ENCODE measurements at regions of chr1 and their contacts with region 1.

Region 1: GRCh38 chr1:150010393-150011115 is at the start of gene OTUD7B:
- DNase-seq: peak; percentile 66
- ATAC-seq: peak; percentile 88
- H3K4me3 ChIP-seq: peak within 1 kb of the TSS; percentile 89 to 90 (median 89)
- H3K27ac ChIP-seq: peak within 1 kb of the TSS; percentile 87
- H3K4me1 ChIP-seq: peaks cover 52% of the 10 kb centered on the region
- H3K27me3 ChIP-seq: no peaks in the 10 kb centered on the region; a peak in 1 of 5 replicates
- CTCF ChIP-seq: peak; percentile 41
- EP300 ChIP-seq: peak in 1 of 2 experiments; percentile 61; a peak in 2 of 4 replicates
- POLR2A ChIP-seq: peak; percentile 76 to 85
- RAD21 ChIP-seq: peak; percentile 62
- total RNA-seq, gene OTUD7B: 11.2 and 13.2 TPM in 2 replicates

Region 2: GRCh38 chr1:150021191-150021694 is 10.7 kb after region 1 on chr1:
- CTCF ChIA-PET with region 1: no interaction called
- POLR2A ChIA-PET with region 1: interaction called, 58 read pairs
- in situ Hi-C with region 1: no loop called
- intact Hi-C with region 1: loop called (anchors 1 kb)
- DNase-seq: peak; percentile 95
- ATAC-seq: peak; percentile 98
- H3K4me3 ChIP-seq: peak overlapping the region in 1 of 3 experiments; percentile 12; a peak in 1 of 6 replicates
- H3K27ac ChIP-seq: peak overlapping the region; percentile 61
- H3K4me1 ChIP-seq: peaks cover 36% of the 10 kb centered on the region
- H3K27me3 ChIP-seq: no peaks in the 10 kb centered on the region
- CTCF ChIP-seq: peak; percentile 18; the same call in 1 of the 2 replicates
- EP300 ChIP-seq: peak in 1 of 2 experiments; percentile 54; a peak in 2 of 4 replicates
- POLR2A ChIP-seq: peak in 1 of 2 experiments; percentile 56; a peak in 1 of 4 replicates
- RAD21 ChIP-seq: no peak

Region 3: DNA sequence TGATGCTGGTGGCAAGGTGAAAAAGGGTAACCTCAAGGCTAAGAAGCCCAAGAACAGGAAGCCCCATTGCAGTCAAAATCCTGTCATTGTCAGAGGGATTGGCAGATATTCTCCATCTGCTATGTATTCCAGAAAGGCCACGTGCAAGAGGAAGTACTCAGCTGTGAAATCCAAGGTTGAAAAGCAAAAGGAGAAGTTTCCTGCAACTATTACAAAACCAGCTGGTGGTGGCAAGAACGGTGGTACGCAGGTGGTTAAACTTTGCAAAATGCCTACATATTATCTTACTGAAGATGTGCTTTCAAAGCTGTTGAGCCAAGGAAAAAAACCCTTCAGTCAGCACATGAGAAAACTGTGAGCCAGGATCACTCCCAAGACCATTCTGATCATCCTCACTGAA is 43.4 kb after region 1 on chr1:
- CTCF ChIA-PET with region 1: no interaction called
- POLR2A ChIA-PET with region 1: interaction called, 3 read pairs
- in situ Hi-C with region 1: no loop called
- intact Hi-C with region 1: loop called (anchors 2 kb)
- DNase-seq: no peak
- ATAC-seq: no peak
- H3K4me3 ChIP-seq: no peak overlapping the region
- H3K27ac ChIP-seq: no peak overlapping the region
- H3K4me1 ChIP-seq: peaks cover 16% of the 10 kb centered on the region; the same call in 1 of the 2 replicates
- H3K27me3 ChIP-seq: no peaks in the 10 kb centered on the region
- CTCF ChIP-seq: no peak
- EP300 ChIP-seq: no peak
- POLR2A ChIP-seq: no peak
- RAD21 ChIP-seq: no peak

Region 4: DNA sequence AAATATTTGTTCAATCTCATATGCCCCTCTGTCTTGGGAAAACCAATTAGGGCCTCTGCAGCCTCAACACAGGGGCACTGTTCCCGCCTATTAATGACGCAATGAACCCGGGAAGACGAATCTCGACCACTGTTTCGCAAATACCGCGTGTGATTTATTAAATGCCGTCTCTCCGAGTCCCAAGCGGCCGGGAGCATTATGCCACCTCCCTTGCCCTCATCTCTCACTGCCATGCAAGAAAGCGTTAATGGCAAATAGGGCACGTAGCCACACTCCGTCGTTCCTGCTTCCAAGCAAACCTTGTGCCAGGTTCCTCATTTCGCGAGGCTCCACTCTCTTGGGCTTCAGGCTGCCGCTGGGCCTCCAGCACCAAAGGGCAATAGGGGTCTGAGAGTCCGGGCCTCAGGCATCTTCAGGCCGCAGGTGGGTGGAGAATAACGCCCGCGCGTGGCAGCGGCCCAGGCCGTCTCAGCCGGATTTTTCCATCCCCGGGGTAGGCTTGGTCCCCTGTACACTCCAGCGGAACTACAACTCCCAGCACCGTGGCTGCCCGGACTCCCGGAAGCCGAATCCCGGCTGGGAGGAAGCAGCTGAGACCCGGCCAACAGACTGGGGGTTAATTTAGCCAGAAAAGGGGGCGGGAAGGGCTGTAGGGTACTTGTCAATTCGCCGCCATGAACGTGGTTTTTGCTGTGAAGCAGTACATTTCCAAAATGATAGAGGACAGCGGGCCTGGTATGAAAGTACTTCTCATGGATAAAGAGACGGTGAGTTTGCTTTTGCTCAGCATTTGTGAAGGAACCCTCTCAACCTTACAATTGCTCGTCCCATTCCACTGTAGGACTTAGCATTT is 56.9 kb after region 1 on chr1 and contains the start of gene VPS45:
- CTCF ChIA-PET with region 1: no interaction called
- POLR2A ChIA-PET with region 1: interaction called, 6 read pairs
- in situ Hi-C with region 1: no loop called
- intact Hi-C with region 1: loop called (anchors 2 kb)
- DNase-seq: peak; percentile 93
- ATAC-seq: peak; percentile 99
- H3K4me3 ChIP-seq: peak within 1 kb of the TSS; percentile 58 to 91 (median 85)
- H3K27ac ChIP-seq: peak within 1 kb of the TSS; percentile 96
- H3K4me1 ChIP-seq: peaks cover 23% of the 10 kb centered on the region
- H3K27me3 ChIP-seq: no peaks in the 10 kb centered on the region; a peak in 1 of 5 replicates
- CTCF ChIP-seq: peak; percentile 13; the same call in 1 of the 2 replicates
- EP300 ChIP-seq: peak in 1 of 2 experiments; percentile 58; a peak in 1 of 4 replicates
- POLR2A ChIP-seq: peak; percentile 64 to 80
- RAD21 ChIP-seq: peak; percentile 45
- total RNA-seq, gene VPS45: 25.2 and 26.5 TPM in 2 replicates